Prostate gland (tissue), 2 donors: ENCODE measurements at regions of chr2 and their contacts with region 1.

Region 1: DNA sequence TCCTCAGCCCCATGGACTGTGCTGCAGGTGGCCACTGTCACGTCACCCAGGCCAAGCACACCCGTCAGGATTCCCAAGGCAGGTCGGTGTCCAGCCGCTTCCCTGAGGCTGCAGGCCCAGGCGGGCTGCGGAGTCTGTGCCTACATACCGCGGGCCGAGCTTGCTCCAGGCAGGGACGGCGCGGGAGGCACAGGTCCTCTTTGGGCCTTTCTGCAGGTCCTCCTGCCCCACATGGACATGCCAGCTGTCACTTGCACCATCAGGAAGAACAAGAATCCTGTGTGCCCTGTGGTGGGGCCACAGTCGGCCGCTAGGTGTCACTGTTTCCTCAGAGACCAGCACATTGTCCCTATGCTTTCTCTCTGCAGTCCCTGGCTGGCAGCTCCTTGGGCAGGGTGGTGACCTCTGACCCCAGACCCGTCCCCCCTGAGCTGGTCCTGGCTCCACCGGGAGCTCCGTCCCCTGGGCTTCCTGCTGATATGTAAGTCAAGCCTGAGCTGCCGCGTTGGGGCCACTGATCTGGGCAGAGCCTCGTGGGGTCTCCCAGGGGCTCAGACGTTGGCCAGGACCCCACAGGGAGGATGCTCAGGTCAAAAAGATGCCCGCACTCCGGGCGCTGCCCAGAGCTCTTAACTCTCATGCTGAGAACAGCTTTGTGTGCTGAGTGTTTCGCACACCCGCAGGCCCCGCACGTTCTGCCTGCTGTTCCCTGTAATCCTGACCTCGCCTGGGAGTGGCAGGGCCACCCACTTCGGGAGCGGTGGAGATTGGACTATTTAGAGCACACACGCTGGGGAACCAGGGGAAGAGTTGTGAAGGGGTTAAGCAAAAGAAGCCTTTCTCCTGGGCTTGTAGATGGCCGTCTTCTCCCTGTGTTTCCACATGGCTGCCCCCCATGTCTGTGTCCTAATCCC is 17.3 kb upstream of the AGXT start:
- DNase-seq: peak; percentile 85
- H3K4me3 ChIP-seq: no peak overlapping the region
- H3K27ac ChIP-seq: no peak overlapping the region
- H3K4me1 ChIP-seq: no peaks in the 10 kb centered on the region
- H3K27me3 ChIP-seq: no peaks in the 10 kb centered on the region
- CTCF ChIP-seq: peak; percentile 94 to 98 (median 95)
- POLR2A ChIP-seq: no peak

Region 2: GRCh38 chr2:241659150-241659739 is 807.9 kb after region 1 on chr2:
- intact Hi-C with region 1: loop called (anchors 5 kb)
- DNase-seq: peak; percentile 63
- H3K4me3 ChIP-seq: no peak overlapping the region
- H3K27ac ChIP-seq: peak overlapping the region in 1 of 2 donors; percentile 41
- H3K4me1 ChIP-seq: peaks cover 3% of the 10 kb centered on the region
- H3K27me3 ChIP-seq: no peaks in the 10 kb centered on the region
- CTCF ChIP-seq: peak in 3 of 4 experiments; percentile 40 to 68 (median 63)
- POLR2A ChIP-seq: no peak